ENCODE measurements at regions of chr9 and their contacts with region 1.

Region 1: GRCh38 chr9:111916234-111916645 is 19.6 kb downstream of the UGCG start:
- DNase-seq: peak; percentile 63
- ATAC-seq: peak; percentile 85
- H3K4me3 Mint-ChIP-seq: peak overlapping the region; percentile 39
- H3K27ac Mint-ChIP-seq: peak overlapping the region; percentile 69
- H3K4me1 Mint-ChIP-seq: peaks cover 56% of the 10 kb centered on the region
- H3K27me3 Mint-ChIP-seq: no peaks in the 10 kb centered on the region

Region 2: DNA sequence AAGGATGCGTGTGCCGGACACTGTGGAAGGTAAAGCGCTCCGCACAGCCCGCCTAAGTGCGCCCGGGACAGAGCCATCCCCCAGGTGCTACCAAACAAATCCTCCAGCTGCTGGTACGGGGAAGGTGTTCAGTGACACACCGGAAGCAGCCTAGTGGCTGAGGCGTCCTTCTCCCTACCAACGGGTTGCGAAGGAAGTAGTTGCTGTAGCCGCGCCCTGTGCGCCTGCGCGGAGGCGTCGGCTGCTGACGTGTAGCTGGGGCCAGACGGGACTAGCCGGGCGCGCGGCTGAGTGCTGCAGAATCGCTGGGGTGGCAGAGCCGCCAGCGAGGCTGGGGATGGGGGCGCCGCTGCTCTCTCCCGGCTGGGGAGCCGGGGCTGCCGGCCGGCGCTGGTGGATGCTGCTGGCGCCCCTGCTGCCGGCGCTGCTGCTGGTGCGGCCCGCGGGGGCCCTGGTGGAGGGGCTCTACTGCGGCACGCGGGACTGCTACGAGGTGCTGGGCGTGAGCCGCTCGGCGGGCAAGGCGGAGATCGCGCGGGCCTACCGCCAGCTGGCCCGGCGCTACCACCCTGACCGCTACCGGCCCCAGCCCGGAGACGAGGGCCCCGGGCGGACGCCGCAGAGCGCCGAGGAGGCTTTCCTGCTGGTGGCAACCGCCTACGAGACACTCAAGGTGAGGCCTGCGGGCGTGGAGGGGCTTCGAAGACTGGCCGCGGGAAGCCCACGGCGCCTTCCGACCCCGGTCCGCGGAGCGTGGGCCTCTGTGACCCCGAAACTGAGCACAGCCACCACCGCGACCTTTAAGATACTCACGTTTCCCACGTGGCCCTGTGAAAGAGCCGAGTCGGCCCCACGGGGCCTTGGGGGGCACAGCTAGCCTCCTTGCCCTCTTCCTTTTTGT is 284.9 kb before region 1 on chr9 and contains the start of gene DNAJC25:
- CTCF ChIA-PET with region 1: no interaction called
- POLR2A ChIA-PET with region 1: no interaction called
- intact Hi-C with region 1: loop called in 1 of 2 experiments (anchors 5 kb)
- DNase-seq: peak; percentile 98
- ATAC-seq: peak; percentile 98
- H3K4me3 Mint-ChIP-seq: peak within 1 kb of the TSS; percentile 94
- H3K27ac Mint-ChIP-seq: peak within 1 kb of the TSS; percentile 91
- H3K4me1 Mint-ChIP-seq: peaks cover 47% of the 10 kb centered on the region
- H3K27me3 Mint-ChIP-seq: no peaks in the 10 kb centered on the region
- total RNA-seq, gene DNAJC25: 6.3 to 7.5 TPM

Region 3: DNA sequence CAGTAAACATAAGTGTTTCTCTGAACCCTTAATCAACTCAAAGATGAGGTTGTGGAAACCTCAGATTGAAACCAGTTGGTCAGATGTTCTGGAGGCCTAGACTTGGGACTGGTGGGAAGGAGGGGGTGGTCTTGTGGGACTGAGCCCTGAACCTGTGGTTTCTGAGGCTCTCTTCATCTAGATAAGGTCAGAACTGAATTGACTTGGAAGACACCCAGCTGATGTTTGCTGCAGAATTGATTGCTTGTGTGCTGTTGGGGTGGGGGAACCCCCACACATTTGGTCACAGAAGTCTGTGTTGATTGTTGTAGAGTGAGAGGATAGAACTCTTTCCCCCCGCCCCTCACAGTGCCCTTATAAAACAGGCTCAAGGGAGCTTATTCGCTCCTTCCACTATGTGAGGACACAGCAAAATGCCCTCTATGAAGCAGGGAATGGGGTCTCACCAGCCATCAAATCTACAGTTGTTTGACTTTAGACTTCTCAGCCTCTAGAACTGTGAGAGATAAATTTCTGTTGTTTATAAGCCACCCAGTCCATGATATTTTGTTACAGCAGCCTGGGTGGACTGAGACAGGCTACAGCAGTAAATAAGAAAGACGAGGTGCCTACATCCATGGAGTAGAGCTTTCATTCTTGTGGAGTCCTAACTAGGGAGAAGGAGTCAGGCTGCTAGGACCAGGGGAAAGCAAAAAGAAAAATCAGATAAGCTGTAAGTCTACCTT is 45.3 kb before region 1 on chr9:
- CTCF ChIA-PET with region 1: no interaction called
- POLR2A ChIA-PET with region 1: no interaction called
- intact Hi-C with region 1: no loop called
- DNase-seq: peak; percentile 56
- ATAC-seq: peak; percentile 94
- H3K4me3 Mint-ChIP-seq: no peak overlapping the region
- H3K27ac Mint-ChIP-seq: no peak overlapping the region
- H3K4me1 Mint-ChIP-seq: peaks cover 13% of the 10 kb centered on the region
- H3K27me3 Mint-ChIP-seq: no peaks in the 10 kb centered on the region

Region 4: DNA sequence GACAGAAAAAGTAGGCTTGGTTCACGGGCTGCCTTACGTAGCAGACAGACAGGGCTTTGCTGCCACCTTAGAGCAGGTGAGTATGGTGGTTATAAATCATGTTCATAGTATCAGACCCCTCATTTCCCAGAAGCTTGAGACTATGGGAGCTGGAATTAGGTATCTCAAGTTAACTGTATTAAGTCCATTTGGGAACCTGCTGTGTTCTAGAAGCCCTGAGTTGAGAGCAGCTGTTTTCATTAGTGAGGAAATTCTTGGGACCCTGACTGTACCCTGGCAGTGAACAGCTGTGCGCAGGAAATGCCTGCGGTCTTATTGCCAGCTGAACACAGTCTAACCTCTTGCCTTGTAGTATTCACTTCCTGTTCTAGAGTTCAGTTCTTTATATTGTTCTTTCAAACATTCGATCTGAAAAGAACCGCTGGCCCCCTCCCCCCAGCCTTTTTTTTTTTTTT is 10.2 kb after region 1 on chr9:
- CTCF ChIA-PET with region 1: interaction called, 6 read pairs
- POLR2A ChIA-PET with region 1: no interaction called
- intact Hi-C with region 1: loop called in 1 of 2 experiments (anchors 1 kb)
- DNase-seq: peak; percentile 68
- ATAC-seq: peak; percentile 96
- H3K4me3 Mint-ChIP-seq: no peak overlapping the region
- H3K27ac Mint-ChIP-seq: no peak overlapping the region
- H3K4me1 Mint-ChIP-seq: peaks cover 25% of the 10 kb centered on the region
- H3K27me3 Mint-ChIP-seq: no peaks in the 10 kb centered on the region

Region 5: DNA sequence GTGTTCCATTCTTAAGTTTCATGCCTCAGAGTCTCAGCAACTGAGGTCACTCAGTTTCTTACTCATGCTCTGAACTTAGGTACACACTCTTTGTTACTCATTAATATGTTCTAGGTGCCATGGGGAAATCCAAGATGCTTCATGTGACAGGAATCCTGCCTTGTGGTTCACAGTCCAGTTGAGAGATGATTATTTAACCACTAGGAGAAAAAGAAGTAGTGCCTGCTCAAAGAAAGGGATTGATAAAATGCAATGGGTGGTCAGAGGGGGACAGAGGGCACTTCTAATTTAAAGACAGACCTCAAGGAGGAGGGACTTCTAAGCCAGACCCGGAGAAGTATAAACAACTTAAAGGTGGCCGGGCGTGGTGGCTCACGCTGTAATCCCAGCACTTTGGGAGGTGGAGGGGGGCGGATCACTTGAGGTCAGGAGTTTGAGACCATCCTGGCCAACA is 49.4 kb after region 1 on chr9:
- CTCF ChIA-PET with region 1: no interaction called
- POLR2A ChIA-PET with region 1: no interaction called
- intact Hi-C with region 1: loop called in 1 of 2 experiments (anchors 2 kb)
- DNase-seq: peak; percentile 34
- ATAC-seq: peak; percentile 95
- H3K4me3 Mint-ChIP-seq: no peak overlapping the region
- H3K27ac Mint-ChIP-seq: no peak overlapping the region
- H3K4me1 Mint-ChIP-seq: peaks cover 15% of the 10 kb centered on the region
- H3K27me3 Mint-ChIP-seq: peaks cover 4% of the 10 kb centered on the region

Region 6: DNA sequence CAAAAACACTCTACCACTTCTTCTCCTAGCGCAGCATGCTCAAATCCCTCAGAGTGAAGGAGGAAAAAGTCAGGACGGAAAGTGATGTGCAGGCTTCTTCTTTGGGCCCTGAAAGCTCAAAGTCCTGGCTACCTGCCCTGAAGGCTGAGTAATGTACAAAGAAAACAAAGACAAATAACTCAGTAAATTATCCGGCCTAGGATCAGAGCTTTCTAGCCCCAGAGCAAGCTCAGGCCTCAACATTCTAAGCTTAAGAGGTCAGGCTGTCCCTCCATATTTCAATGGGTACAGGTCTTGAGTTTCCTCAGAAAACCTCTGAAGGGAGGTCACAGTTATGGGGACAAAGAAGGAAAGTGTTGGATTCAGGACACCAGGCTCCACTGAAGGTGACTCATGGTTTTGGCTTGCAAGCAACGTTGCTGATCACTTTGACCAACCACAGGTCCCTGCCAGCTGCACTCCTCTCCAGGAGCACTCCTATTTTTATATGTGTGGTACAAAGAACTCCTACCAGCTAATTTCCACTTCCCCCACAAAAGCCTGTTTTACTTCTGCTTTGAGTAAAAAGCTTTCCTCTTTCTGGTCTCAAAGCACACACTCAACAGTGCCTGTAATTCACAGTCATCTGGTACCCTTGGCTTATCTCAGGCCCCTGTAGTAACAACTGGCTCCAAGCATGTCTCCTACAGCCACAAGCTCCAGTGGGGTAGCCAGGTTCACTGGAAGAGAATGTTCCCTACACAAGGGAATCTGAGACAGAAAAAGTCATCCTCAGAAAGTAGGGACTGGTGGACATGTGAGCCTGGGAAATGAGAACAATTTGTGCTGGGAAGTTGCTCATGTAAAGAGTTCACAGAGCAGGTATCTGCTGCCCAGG is 96.0 kb after region 1 on chr9:
- CTCF ChIA-PET with region 1: no interaction called
- POLR2A ChIA-PET with region 1: interaction called, 3 read pairs
- intact Hi-C with region 1: loop called (anchors 1 to 5 kb)
- DNase-seq: peak; percentile 43
- ATAC-seq: peak; percentile 97
- H3K4me3 Mint-ChIP-seq: no peak overlapping the region
- H3K27ac Mint-ChIP-seq: peak overlapping the region; percentile 27
- H3K4me1 Mint-ChIP-seq: peaks cover 34% of the 10 kb centered on the region
- H3K27me3 Mint-ChIP-seq: peaks cover 17% of the 10 kb centered on the region

Region 7: DNA sequence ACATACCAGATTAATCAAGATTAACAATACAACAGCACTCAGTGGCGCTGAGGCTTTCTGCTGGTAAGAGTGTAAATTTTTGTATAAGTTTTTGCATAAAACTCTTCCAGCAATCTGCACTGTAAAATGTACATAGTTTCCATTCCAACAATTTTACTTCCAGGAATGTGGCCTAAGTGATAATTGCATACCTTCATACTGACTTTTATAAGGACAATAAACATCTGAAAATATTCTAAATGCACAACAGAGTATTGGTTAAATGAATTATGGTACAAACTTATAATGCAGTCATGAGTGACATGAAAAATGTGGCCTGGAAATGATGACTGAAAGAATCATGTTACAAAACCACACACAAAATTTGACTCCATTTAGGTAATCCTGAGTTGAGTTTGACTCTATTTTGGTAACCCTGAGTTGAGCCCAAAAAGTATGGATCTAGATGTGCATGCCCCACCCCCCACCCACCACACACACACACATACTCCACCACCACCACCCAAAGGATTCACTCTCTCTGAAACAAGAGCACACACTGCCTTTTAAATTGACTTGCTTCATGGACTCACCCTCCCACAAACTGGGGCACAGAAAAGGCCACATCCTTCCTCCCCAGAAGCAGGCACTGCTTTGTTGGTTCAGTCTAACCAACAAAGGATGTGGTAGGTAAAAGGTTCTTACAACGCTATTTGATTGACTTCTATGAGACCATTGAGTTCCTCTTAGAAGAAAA is 121.2 kb after region 1 on chr9:
- CTCF ChIA-PET with region 1: no interaction called
- POLR2A ChIA-PET with region 1: no interaction called
- intact Hi-C with region 1: loop called (anchors 1 kb)
- DNase-seq: peak; percentile 82
- ATAC-seq: peak; percentile 95
- H3K4me3 Mint-ChIP-seq: no peak overlapping the region
- H3K27ac Mint-ChIP-seq: peak overlapping the region; percentile 74
- H3K4me1 Mint-ChIP-seq: peaks cover 64% of the 10 kb centered on the region
- H3K27me3 Mint-ChIP-seq: peaks cover 11% of the 10 kb centered on the region

Region 8: GRCh38 chr9:112379177-112380101 is 463.2 kb after region 1 on chr9:
- CTCF ChIA-PET with region 1: no interaction called
- POLR2A ChIA-PET with region 1: interaction called, 4 read pairs
- intact Hi-C with region 1: loop called in 1 of 2 experiments (anchors 2 kb)
- DNase-seq: peak; percentile 99
- ATAC-seq: peak; percentile 93
- H3K4me3 Mint-ChIP-seq: peak overlapping the region; percentile 98
- H3K27ac Mint-ChIP-seq: peak overlapping the region; percentile 100
- H3K4me1 Mint-ChIP-seq: peaks cover 42% of the 10 kb centered on the region
- H3K27me3 Mint-ChIP-seq: no peaks in the 10 kb centered on the region

Region 9: DNA sequence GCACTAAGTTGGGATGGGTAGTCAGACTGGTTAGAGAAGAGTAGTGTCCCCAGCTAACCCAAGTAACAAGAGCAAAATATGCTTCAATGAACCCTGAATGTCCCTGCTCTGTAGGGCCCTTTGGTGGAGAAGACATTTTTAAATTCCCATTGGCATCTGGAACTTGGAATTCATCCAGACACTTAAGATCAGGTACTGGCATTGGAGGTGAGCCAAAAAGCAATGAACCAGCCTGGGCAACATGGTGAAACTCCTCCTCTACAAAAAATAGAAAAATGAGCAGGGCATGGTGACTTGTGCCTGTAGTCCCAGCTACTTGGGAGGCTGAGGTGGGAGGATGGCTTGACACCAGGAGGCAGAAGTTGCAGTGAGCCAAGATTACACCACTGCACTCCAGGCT is 1900.9 kb after region 1 on chr9:
- CTCF ChIA-PET with region 1: no interaction called
- POLR2A ChIA-PET with region 1: no interaction called
- intact Hi-C with region 1: no loop called
- DNase-seq: no peak
- ATAC-seq: no peak
- H3K4me3 Mint-ChIP-seq: no peak overlapping the region
- H3K27ac Mint-ChIP-seq: no peak overlapping the region
- H3K4me1 Mint-ChIP-seq: no peaks in the 10 kb centered on the region
- H3K27me3 Mint-ChIP-seq: peaks cover 39% of the 10 kb centered on the region

Measured in activated CD4-positive, alpha-beta T cell treated with anti-CD3 and anti-CD28 coated beads for 36 hours (primary cell).